ENCODE measurements at regions of chr6 and their contacts with region 1.

Region 1: DNA sequence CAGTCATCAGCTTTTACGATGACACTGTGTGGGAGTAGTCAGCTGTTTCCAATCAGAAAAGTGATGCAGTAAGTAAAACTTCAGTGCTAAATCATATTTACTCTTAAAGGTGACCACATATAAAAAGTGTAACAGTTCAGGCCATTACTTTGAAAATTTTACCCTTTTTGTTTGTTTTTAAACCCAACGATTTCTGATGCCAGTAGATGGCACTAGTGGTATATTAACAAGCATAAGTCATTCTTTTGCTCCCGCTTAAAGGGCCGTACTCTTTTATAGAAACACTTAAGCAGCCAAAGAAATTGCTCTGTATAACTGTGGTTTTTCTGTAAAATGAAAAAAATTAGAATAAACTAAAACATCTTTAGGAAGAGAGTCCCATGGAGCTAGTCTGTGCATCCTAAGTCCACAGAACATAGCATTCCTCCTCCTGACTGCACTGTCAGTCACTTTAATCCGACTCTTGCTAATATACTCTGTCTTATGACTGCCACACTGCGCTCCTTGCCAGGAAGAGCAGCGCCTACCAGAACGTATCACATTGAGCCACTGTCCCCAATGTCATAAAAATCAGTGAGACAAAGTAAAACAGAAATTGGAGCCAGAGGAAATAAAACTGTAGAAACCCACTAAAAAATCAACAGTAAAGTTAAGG is 25.0 kb downstream of the HEBP2 start:
- DNase-seq: no peak
- H3K4me3 ChIP-seq: no peak overlapping the region
- H3K27me3 ChIP-seq: no peaks in the 10 kb centered on the region
- CTCF ChIP-seq: peak; percentile 66

Region 2: GRCh38 chr6:138205437-138206094 is 223.5 kb before region 1 on chr6:
- CTCF ChIA-PET with region 1: no interaction called
- POLR2A ChIA-PET with region 1: no interaction called
- DNase-seq: no peak
- H3K4me3 ChIP-seq: no peak overlapping the region
- H3K27me3 ChIP-seq: no peaks in the 10 kb centered on the region
- CTCF ChIP-seq: no peak

Region 3: DNA sequence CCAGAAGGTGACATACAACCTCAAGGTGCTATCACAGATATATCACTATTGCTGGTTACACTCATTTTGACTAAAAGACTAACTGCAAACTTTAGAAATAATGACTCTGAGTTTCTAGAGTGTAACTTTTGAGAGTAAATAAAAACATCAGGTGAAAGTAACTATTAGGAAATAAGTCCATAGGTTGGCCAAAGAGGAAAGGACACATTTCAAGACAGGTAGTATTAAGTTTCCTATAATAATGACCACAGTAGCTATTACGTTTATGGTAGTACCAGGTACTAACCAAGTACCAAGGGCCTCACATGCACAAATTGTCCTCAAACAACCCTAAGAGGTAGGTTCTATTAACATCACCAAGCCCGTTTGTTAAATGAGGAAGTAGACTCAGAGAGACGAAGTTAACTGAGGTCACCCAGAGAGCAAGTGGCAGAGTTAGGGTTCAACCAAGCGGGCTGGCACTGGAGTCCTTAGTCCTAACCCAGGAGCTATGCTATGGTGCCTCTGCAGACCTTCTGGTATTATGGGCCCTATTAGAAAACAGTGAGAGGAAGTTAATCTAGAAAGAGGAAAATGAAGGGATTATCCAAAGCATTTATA is 11.8 kb after region 1 on chr6:
- CTCF ChIA-PET with region 1: interaction called, 13 read pairs
- POLR2A ChIA-PET with region 1: no interaction called
- DNase-seq: no peak
- H3K4me3 ChIP-seq: no peak overlapping the region
- H3K27me3 ChIP-seq: no peaks in the 10 kb centered on the region
- CTCF ChIP-seq: no peak

Region 4: GRCh38 chr6:138499303-138500018 is 70.4 kb after region 1 on chr6 and contains the start of gene NHSL1:
- CTCF ChIA-PET with region 1: interaction called, 13 read pairs
- POLR2A ChIA-PET with region 1: no interaction called
- DNase-seq: no peak
- H3K4me3 ChIP-seq: no peak within 1 kb of the TSS
- H3K27me3 ChIP-seq: no peaks in the 10 kb centered on the region
- CTCF ChIP-seq: no peak
- polyA plus RNA-seq, gene NHSL1: 3.3 and 3.6 TPM in 2 replicates

Region 5: GRCh38 chr6:138509371-138509770 is 80.3 kb after region 1 on chr6:
- CTCF ChIA-PET with region 1: interaction called, 95 read pairs
- POLR2A ChIA-PET with region 1: no interaction called
- DNase-seq: no peak
- H3K4me3 ChIP-seq: no peak overlapping the region
- H3K27me3 ChIP-seq: no peaks in the 10 kb centered on the region
- CTCF ChIP-seq: peak; percentile 47

Region 6: DNA sequence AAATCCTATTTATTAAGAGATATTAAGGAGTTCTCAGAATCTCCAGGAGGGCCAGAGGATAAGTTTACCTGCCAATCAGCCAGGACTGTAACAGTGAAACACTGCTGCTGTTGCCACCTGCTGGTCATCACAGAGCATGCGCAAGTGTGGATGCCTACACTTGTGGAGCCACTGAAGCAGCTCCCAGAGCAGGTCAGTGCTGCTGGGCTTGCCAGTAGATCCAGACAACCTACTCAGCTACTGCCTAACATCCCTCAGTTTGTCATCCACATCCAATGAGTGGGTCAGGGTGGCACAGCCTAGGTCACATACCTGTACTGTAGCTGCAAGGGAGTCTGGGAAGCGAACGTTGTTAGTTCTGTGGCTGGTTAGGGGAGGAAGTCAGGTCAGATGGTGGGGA is 88.6 kb after region 1 on chr6:
- CTCF ChIA-PET with region 1: interaction called, 95 read pairs
- POLR2A ChIA-PET with region 1: no interaction called
- DNase-seq: no peak
- H3K4me3 ChIP-seq: no peak overlapping the region
- H3K27me3 ChIP-seq: no peaks in the 10 kb centered on the region
- CTCF ChIP-seq: peak; percentile 79

Region 7: DNA sequence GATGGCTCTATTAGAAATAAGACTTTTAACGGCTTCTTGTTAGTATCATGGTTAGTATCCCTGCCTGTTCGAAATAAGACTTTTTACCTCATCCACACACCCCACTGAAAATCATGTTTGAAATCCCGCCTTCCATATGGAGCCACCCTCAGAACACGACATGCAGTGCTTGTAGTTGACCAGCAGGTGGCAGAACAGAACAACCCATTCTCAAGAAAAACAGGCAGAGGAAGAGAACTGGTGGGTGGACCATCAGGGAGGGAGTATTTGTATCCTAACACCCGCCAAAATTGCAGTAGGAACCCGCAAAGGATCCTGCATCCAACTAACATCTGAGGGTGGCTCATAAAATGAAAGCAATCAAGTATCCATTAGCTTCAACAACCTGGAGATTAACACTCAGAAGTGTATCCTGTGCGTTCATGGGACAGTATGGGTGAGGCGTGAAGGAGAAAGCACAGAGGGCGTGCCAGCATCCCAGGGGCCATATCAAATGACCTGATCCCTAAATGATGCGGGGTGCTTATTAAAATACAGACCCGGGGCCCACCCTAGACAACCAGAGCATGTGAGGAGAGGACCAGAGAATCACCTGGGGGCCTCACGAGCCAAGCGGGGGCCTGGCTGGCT is 159.8 kb after region 1 on chr6:
- CTCF ChIA-PET with region 1: interaction called, 11 read pairs
- POLR2A ChIA-PET with region 1: no interaction called
- DNase-seq: no peak
- H3K4me3 ChIP-seq: no peak overlapping the region
- H3K27me3 ChIP-seq: no peaks in the 10 kb centered on the region
- CTCF ChIP-seq: peak; percentile 94

Region 8: DNA sequence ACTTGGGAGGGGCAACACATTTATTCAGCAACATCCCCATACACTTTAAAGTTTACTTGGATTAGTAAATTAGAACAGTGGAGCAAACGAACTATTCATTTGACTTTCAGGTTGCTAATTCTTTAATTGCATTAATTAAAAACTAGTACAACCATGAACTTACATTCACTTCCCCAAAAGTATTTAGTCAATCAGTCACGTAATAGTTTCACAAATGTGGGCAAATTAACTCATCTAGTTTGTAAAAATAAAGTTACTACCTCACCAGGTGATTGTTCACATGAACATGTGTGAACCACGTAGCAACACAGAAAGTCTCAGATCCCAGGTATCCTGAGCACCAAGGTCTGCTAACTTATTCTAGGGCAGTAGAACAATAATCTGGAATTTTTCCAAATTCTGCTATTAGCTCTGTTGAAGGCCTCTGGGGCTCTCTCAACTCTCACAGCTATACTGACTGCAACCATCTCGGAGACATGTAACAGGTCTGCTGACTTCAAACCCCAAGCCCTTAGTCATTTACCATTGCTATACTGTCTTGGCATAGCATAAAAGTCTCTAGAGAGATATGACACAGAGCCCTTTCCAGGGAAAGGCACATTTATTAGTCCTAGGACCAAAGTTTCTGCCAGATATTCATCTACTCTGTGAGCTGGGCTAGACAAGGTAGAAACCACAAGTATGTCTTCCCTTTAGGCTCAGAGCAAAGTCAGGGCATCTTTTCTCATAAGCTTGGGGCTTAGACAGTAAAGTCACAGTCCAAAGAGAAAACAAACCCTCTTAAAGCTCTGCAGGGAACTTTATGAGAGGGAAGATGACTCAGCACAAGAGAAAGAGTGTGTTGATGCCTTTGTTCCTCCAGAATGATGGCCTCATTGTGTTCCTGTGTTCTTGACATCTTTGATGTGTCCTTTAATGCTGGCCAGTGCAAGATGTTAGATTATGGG is 293.6 kb after region 1 on chr6:
- CTCF ChIA-PET with region 1: no interaction called
- POLR2A ChIA-PET with region 1: no interaction called
- DNase-seq: peak; percentile 20
- H3K4me3 ChIP-seq: no peak overlapping the region
- H3K27me3 ChIP-seq: no peaks in the 10 kb centered on the region
- CTCF ChIP-seq: no peak

Measured in BJ (cell line).